PC-9 (cell line): ENCODE measurements at regions of chr5 and their contacts with region 1.

Region 1: GRCh38 chr5:95858661-95859326 is 36.3 kb upstream of the GLRX start:
- DNase-seq: peak; percentile 89 to 97
- H3K4me3 ChIP-seq: peak overlapping the region; percentile 38
- H3K27ac ChIP-seq: peak overlapping the region; percentile 95
- H3K4me1 ChIP-seq: peaks cover 55% of the 10 kb centered on the region
- H3K27me3 ChIP-seq: no peaks in the 10 kb centered on the region
- CTCF ChIP-seq: peak; percentile 99

Region 2: GRCh38 chr5:93941897-93942296 is 1916.9 kb before region 1 on chr5:
- CTCF ChIA-PET with region 1: no interaction called
- POLR2A ChIA-PET with region 1: no interaction called
- intact Hi-C with region 1: no loop called
- DNase-seq: no peak
- H3K4me3 ChIP-seq: no peak overlapping the region
- H3K27ac ChIP-seq: no peak overlapping the region
- H3K4me1 ChIP-seq: no peaks in the 10 kb centered on the region
- H3K27me3 ChIP-seq: no peaks in the 10 kb centered on the region
- CTCF ChIP-seq: no peak

Region 3: DNA sequence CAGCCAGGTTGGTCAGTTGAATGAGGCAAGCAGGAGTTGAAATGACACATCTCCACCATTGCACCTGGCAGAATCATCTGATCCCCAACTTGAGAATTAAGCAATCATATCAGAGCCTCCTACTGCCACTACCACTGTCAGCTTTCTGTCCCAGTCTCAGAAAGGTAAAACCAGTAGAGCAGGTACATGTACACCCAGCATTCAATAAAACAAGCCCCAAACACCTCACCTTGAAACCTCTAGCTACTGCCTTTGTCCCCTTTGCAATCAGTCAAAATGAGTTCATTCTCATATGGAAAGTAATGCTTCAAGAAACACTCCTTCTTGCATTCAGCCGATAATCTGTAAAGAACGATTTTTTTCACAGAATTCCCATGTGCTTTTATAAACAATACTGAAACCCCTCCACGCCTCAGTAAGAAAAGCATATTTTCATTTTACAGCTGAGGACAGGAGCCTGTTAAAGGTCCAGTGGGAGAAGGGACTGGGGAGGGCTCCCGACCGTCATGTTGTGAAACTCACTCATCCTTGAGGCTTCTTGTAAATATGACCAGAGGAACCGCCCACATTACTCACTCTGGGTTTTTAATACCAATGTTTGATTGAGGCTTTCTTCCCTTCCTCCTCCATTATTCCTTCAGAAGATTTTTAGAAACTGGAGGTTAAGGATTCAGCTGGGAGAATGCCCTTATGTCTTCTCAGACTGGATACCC is 25.0 kb after region 1 on chr5:
- CTCF ChIA-PET with region 1: no interaction called
- POLR2A ChIA-PET with region 1: no interaction called
- intact Hi-C with region 1: loop called (anchors 2 kb)
- DNase-seq: peak; percentile 27 to 89
- H3K4me3 ChIP-seq: peak overlapping the region; percentile 22; the same call in 1 of the 2 replicates
- H3K27ac ChIP-seq: peak overlapping the region; percentile 75
- H3K4me1 ChIP-seq: peaks cover 26% of the 10 kb centered on the region
- H3K27me3 ChIP-seq: no peaks in the 10 kb centered on the region
- CTCF ChIP-seq: no peak

Region 4: GRCh38 chr5:95900383-95900958 is 41.7 kb after region 1 on chr5:
- CTCF ChIA-PET with region 1: interaction called, 27 read pairs
- POLR2A ChIA-PET with region 1: no interaction called
- intact Hi-C with region 1: no loop called
- DNase-seq: no peak
- H3K4me3 ChIP-seq: no peak overlapping the region
- H3K27ac ChIP-seq: no peak overlapping the region
- H3K4me1 ChIP-seq: no peaks in the 10 kb centered on the region
- H3K27me3 ChIP-seq: no peaks in the 10 kb centered on the region
- CTCF ChIP-seq: no peak

Region 5: DNA sequence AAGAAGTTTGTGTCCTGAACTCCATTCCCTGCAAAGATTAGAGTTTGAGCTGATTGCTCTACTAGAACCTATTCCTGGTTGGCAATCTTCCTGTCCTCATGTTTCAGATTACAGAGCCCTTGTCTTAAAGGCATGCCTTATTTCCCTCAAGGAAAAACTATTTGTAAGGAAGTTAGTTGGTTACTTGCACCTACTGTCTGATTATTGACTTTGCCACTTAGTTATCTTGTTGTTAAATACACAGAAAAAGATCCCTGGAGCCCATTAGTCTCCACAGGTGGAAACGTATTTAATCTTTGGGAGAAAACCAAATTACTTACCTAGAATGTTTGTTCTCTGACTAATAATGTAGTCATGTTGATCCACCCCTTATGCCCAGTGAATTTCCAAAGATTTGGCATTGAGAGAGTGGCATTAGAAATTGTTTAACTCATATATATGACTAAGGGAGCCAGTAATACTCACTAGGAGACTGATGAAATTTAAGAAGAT is 235.1 kb after region 1 on chr5:
- CTCF ChIA-PET with region 1: no interaction called
- POLR2A ChIA-PET with region 1: no interaction called
- intact Hi-C with region 1: loop called (anchors 5 kb)
- DNase-seq: peak; percentile 21 to 97
- H3K4me3 ChIP-seq: no peak overlapping the region
- H3K27ac ChIP-seq: peak overlapping the region; percentile 88
- H3K4me1 ChIP-seq: peaks cover 36% of the 10 kb centered on the region
- H3K27me3 ChIP-seq: no peaks in the 10 kb centered on the region
- CTCF ChIP-seq: no peak

Region 6: GRCh38 chr5:96226941-96227552 is 368.3 kb after region 1 on chr5:
- CTCF ChIA-PET with region 1: no interaction called
- POLR2A ChIA-PET with region 1: no interaction called
- intact Hi-C with region 1: loop called (anchors 10 kb)
- DNase-seq: peak; percentile 8 to 51
- H3K4me3 ChIP-seq: no peak overlapping the region
- H3K27ac ChIP-seq: 0 out of 2 replicates have a peak overlapping the region, but pooled peaks have one; percentile 4
- H3K4me1 ChIP-seq: peaks cover 13% of the 10 kb centered on the region
- H3K27me3 ChIP-seq: no peaks in the 10 kb centered on the region
- CTCF ChIP-seq: no peak

Region 7: GRCh38 chr5:96601811-96602244 is 743.0 kb after region 1 on chr5:
- CTCF ChIA-PET with region 1: no interaction called
- POLR2A ChIA-PET with region 1: no interaction called
- intact Hi-C with region 1: loop called (anchors 2 kb)
- DNase-seq: peak; percentile 32 to 38
- H3K4me3 ChIP-seq: no peak overlapping the region
- H3K27ac ChIP-seq: no peak overlapping the region
- H3K4me1 ChIP-seq: no peaks in the 10 kb centered on the region
- H3K27me3 ChIP-seq: no peaks in the 10 kb centered on the region
- CTCF ChIP-seq: peak; percentile 89

Region 8: GRCh38 chr5:97476852-97477534 is 1618.2 kb after region 1 on chr5:
- CTCF ChIA-PET with region 1: no interaction called
- POLR2A ChIA-PET with region 1: no interaction called
- intact Hi-C with region 1: no loop called
- DNase-seq: no peak
- H3K4me3 ChIP-seq: no peak overlapping the region
- H3K27ac ChIP-seq: no peak overlapping the region
- H3K4me1 ChIP-seq: no peaks in the 10 kb centered on the region
- H3K27me3 ChIP-seq: no peaks in the 10 kb centered on the region
- CTCF ChIP-seq: no peak